ENCODE measurements at regions of chr4 and their contacts with region 1.

Region 1: DNA sequence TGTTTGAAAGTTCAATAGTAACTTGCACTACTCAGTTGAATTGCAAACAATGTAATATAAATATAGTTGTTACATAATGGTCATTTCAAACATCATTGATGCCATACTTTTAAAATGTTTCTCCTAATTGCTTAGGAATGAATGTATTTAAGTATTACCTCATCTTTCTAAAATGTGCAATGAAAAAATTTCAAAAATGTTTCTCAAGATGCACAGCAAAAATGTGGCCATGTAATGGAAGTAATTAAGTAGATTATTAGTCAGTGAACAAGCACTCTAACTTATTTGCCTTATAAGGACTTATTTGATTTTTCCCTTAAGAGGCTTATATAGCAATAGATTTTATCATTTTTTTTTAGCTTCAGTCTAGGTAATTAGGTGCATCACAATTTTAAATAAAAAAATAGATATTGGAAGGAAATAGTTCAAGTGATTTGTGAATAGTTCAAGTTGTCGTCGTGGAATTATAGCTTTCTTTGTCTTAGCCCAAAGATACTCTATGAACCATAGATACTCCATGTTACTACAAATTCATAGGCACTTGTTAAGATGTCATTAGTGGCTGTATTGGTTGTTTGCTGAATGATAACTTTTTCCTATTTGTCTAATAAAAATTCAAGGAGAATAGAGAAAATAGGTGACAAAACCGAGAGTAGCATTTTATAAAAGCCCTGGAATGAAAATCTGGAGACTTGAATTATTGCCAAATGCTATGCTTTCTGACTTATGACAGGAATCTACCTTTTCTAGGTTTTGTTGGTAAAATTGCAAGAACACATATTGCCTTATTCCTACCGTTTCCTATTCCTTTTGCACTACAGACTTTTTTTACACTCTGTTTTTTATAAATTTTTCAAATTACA is 118.5 kb downstream of the TLL1 start:
- DNase-seq: no peak
- ATAC-seq: no peak
- H3K4me3 ChIP-seq: no peak overlapping the region
- H3K27ac ChIP-seq: no peak overlapping the region
- H3K4me1 ChIP-seq: no peaks in the 10 kb centered on the region
- H3K27me3 ChIP-seq: no peaks in the 10 kb centered on the region
- CTCF ChIP-seq: no peak

Region 2: DNA sequence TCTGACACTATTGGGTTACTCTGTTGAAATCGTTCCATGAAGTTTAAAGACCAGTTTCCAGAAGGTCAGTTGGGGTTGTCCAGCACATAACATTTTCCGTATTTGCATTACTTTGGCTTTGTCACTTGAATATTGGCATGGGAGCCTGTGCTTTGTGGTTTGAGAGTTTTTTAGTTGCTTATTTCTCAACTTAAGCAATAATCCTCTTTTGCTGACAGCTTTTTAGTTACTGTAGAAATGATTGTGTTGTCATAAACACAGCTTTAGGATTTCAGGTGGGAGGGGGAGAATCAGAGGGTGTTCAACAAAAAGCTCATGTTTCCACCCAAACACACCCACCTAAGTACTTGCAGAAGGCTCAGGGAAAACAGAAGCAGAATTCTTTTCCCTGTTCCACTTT is 329.2 kb before region 1 on chr4:
- CTCF ChIA-PET with region 1: no interaction called
- POLR2A ChIA-PET with region 1: no interaction called
- in situ Hi-C with region 1: no loop called
- intact Hi-C with region 1: no loop called
- DNase-seq: no peak
- ATAC-seq: no peak
- H3K4me3 ChIP-seq: no peak overlapping the region
- H3K27ac ChIP-seq: no peak overlapping the region
- H3K4me1 ChIP-seq: no peaks in the 10 kb centered on the region
- H3K27me3 ChIP-seq: no peaks in the 10 kb centered on the region
- CTCF ChIP-seq: no peak

Region 3: DNA sequence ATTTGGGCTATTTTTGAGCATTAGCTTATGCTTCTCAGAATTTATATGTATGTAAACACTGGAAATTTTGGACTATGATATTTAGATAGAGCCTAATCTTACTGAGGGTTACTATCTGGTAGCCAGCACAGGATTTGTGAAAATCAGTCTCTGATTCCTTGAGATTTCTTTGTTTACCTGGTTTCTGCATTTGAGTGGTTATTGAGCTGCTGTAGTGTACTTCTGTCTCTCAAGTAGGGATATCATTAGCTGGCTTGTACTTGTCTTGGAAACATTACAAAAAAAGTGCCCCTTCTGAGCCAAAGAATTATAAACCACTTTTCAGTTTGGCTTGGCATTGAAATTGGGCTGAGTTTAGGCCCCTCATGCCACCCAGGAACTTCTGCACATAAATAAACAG is 68.8 kb before region 1 on chr4:
- CTCF ChIA-PET with region 1: no interaction called
- POLR2A ChIA-PET with region 1: interaction called, 14 read pairs
- in situ Hi-C with region 1: no loop called
- intact Hi-C with region 1: no loop called
- DNase-seq: no peak
- ATAC-seq: no peak
- H3K4me3 ChIP-seq: no peak overlapping the region
- H3K27ac ChIP-seq: no peak overlapping the region
- H3K4me1 ChIP-seq: no peaks in the 10 kb centered on the region
- H3K27me3 ChIP-seq: no peaks in the 10 kb centered on the region
- CTCF ChIP-seq: no peak

Region 4: GRCh38 chr4:166049036-166049435 is 57.5 kb after region 1 on chr4:
- CTCF ChIA-PET with region 1: no interaction called
- POLR2A ChIA-PET with region 1: no interaction called
- in situ Hi-C with region 1: no loop called
- intact Hi-C with region 1: no loop called
- DNase-seq: no peak
- ATAC-seq: no peak
- H3K4me3 ChIP-seq: no peak overlapping the region
- H3K27ac ChIP-seq: no peak overlapping the region
- H3K4me1 ChIP-seq: no peaks in the 10 kb centered on the region
- H3K27me3 ChIP-seq: no peaks in the 10 kb centered on the region
- CTCF ChIP-seq: no peak